Psoas muscle (tissue), 8 donors: ENCODE measurements at regions of chr15 and their contacts with region 1.

Region 1: GRCh38 chr15:58227706-58228543 is 89.7 kb downstream of the AQP9 start:
- DNase-seq: peak; percentile 71 to 84
- ATAC-seq: peak; percentile 67 to 83 (median 71)
- H3K4me3 ChIP-seq: no peak overlapping the region
- H3K27ac ChIP-seq: peak overlapping the region; percentile 86
- H3K4me1 ChIP-seq: peaks cover 36% of the 10 kb centered on the region
- H3K27me3 ChIP-seq: no peaks in the 10 kb centered on the region
- CTCF ChIP-seq: peak; percentile 94

Region 2: DNA sequence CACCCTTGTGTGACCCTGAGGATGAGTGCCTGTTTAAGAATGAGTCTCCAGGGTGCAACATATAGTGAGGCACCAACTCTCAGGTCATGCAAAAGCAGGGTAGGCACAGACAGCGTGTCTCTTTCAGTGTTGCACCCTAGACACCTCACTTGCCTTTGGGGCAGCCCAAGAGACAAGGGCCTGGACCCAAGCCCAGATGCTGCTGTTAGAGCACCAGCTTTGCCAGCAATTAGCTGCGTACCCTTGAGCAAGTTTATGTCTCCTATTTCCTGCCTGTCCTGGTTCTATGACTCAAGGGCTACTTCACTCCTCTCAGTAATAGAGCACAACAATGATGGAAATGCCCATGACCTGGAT is 33.0 kb after region 1 on chr15:
- intact Hi-C with region 1: loop called in 1 of 2 experiments (anchors 1 kb)
- DNase-seq: peak; percentile 61 to 89
- ATAC-seq: peak; percentile 88 to 92 (median 88)
- H3K4me3 ChIP-seq: no peak overlapping the region
- H3K27ac ChIP-seq: peak overlapping the region; percentile 92
- H3K4me1 ChIP-seq: peaks cover 25% of the 10 kb centered on the region
- H3K27me3 ChIP-seq: no peaks in the 10 kb centered on the region
- CTCF ChIP-seq: no peak

Region 3: GRCh38 chr15:58331903-58332675 is 104.2 kb after region 1 on chr15:
- intact Hi-C with region 1: loop called in 1 of 2 experiments (anchors 5 kb)
- DNase-seq: peak; percentile 94 to 98
- ATAC-seq: peak; percentile 90 to 97 (median 94)
- H3K4me3 ChIP-seq: peak overlapping the region; percentile 2
- H3K27ac ChIP-seq: peak overlapping the region; percentile 95
- H3K4me1 ChIP-seq: peaks cover 36% of the 10 kb centered on the region
- H3K27me3 ChIP-seq: no peaks in the 10 kb centered on the region
- CTCF ChIP-seq: no peak

Region 4: GRCh38 chr15:58546635-58547627 is 319.0 kb after region 1 on chr15:
- intact Hi-C with region 1: loop called (anchors 2 to 10 kb)
- DNase-seq: peak; percentile 59 to 80
- ATAC-seq: peak; percentile 91 to 95 (median 92)
- H3K4me3 ChIP-seq: no peak overlapping the region
- H3K27ac ChIP-seq: peak overlapping the region; percentile 56
- H3K4me1 ChIP-seq: peaks cover 35% of the 10 kb centered on the region
- H3K27me3 ChIP-seq: peaks cover 0 to 1% (median 0%) of the 10 kb centered on the region in 3 donors
- CTCF ChIP-seq: no peak

Region 5: GRCh38 chr15:58761010-58761388 is 533.1 kb after region 1 on chr15:
- intact Hi-C with region 1: loop called in 1 of 2 experiments (anchors 10 kb)
- DNase-seq: no peak
- ATAC-seq: no peak
- H3K4me3 ChIP-seq: no peak overlapping the region
- H3K27ac ChIP-seq: no peak overlapping the region
- H3K4me1 ChIP-seq: no peaks in the 10 kb centered on the region
- H3K27me3 ChIP-seq: peaks cover 0 to 2% (median 0%) of the 10 kb centered on the region in 3 donors
- CTCF ChIP-seq: no peak